ENCODE measurements at regions of chr10 and their contacts with region 1.

Region 1: GRCh38 chr10:62038609-62039190 is 137.2 kb downstream of the ARID5B start:
- DNase-seq: peak; percentile 100
- ATAC-seq: peak; percentile 50
- H3K4me3 ChIP-seq: peak overlapping the region; percentile 46
- H3K27ac ChIP-seq: peak overlapping the region; percentile 85
- H3K4me1 ChIP-seq: peaks cover 54% of the 10 kb centered on the region
- H3K27me3 ChIP-seq: no peaks in the 10 kb centered on the region
- CTCF ChIP-seq: peak; percentile 100

Region 2: DNA sequence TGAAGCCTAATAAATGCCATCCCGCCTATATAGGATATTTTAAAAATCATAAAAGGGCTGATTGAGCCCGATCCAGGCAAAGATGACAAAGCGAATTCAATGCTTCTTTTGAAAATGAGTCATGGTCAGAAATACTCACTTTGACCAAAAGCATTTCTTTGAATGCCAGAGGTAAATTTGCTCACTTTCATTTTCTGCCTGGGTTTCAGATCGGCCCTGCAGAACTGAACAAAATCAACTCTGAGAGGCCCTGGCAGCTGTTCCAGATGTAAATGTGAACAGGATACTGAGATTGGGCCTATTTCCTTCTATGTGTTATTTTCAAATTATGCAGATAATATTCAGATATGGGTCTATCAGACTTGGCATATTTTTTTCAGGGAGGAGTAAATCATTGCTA is 252.0 kb before region 1 on chr10:
- CTCF ChIA-PET with region 1: no interaction called
- POLR2A ChIA-PET with region 1: no interaction called
- intact Hi-C with region 1: no loop called
- DNase-seq: peak; percentile 93
- ATAC-seq: peak; percentile 80
- H3K4me3 ChIP-seq: peak overlapping the region; percentile 55
- H3K27ac ChIP-seq: peak overlapping the region; percentile 53
- H3K4me1 ChIP-seq: peaks cover 29% of the 10 kb centered on the region
- H3K27me3 ChIP-seq: no peaks in the 10 kb centered on the region
- CTCF ChIP-seq: no peak

Region 3: GRCh38 chr10:61835069-61835945 is 203.4 kb before region 1 on chr10:
- CTCF ChIA-PET with region 1: interaction called, 5 read pairs
- POLR2A ChIA-PET with region 1: interaction called, 3 read pairs
- intact Hi-C with region 1: loop called (anchors 1 kb)
- DNase-seq: peak; percentile 96
- ATAC-seq: peak; percentile 34
- H3K4me3 ChIP-seq: peak overlapping the region; percentile 25
- H3K27ac ChIP-seq: peak overlapping the region; percentile 66
- H3K4me1 ChIP-seq: peaks cover 50% of the 10 kb centered on the region
- H3K27me3 ChIP-seq: no peaks in the 10 kb centered on the region
- CTCF ChIP-seq: peak; percentile 99

Region 4: DNA sequence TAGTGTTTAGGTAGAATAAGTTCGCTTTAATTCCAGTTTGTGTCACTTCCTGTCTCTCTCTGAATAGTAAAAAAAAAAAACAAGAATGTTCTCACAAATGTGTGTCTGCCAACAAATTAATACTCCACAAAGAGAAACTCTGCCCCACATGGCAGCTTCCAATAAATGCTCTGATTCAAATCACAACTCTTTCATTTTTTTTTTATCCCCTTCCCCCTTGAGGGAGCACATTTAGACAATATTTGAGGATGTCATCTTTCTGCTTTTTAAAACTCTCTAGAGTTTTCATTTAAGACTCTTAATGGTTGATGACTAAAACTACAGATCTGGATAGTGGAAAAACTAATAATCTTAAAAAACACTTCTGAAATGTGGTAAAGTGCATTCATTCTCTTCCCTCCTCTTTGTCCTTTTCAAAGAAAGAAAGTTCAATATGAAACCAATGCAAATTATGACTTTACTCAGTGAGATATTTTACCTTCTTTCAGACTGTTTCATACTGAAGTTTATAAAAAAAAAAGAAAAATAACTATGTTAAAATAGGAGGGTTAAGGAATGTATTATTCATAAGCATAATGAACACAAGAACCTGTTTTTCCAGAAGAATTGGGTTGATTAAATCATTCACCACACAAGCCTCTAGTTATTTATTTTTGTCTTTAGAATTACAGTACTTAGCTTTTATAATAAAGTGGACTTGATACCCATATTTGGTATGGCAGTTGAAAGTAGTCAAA is 94.9 kb before region 1 on chr10:
- CTCF ChIA-PET with region 1: interaction called, 4 read pairs
- POLR2A ChIA-PET with region 1: interaction called, 5 read pairs
- intact Hi-C with region 1: loop called (anchors 1 kb)
- DNase-seq: peak; percentile 99
- ATAC-seq: peak; percentile 14
- H3K4me3 ChIP-seq: peak overlapping the region; percentile 31
- H3K27ac ChIP-seq: peak overlapping the region; percentile 72
- H3K4me1 ChIP-seq: peaks cover 65% of the 10 kb centered on the region
- H3K27me3 ChIP-seq: no peaks in the 10 kb centered on the region
- CTCF ChIP-seq: peak; percentile 73

Region 5: DNA sequence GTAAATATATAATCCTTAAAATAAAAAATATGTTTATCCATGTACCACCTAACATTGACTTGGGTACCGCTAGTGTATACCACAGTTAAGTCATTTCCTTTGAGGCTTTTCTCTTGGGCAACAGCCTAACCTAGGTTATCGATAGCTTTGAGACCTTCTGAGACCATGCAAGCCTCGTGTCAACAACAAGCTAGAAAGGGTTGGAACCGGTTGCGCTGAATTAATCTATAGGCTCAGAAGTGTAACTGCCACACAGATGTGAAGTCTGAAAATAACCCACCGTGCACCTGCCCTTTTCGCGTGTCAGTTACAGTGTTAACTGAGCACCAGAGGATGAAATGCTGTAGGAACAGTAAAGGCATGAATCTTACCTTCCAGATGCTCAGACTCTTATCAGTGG is 77.4 kb before region 1 on chr10:
- CTCF ChIA-PET with region 1: no interaction called
- POLR2A ChIA-PET with region 1: no interaction called
- intact Hi-C with region 1: no loop called
- DNase-seq: no peak
- ATAC-seq: no peak
- H3K4me3 ChIP-seq: no peak overlapping the region
- H3K27ac ChIP-seq: no peak overlapping the region
- H3K4me1 ChIP-seq: no peaks in the 10 kb centered on the region
- H3K27me3 ChIP-seq: no peaks in the 10 kb centered on the region
- CTCF ChIP-seq: no peak

Region 6: GRCh38 chr10:61974601-61975390 is 63.9 kb before region 1 on chr10:
- CTCF ChIA-PET with region 1: no interaction called
- POLR2A ChIA-PET with region 1: no interaction called
- intact Hi-C with region 1: no loop called
- DNase-seq: peak; percentile 68
- ATAC-seq: peak; percentile 27
- H3K4me3 ChIP-seq: no peak overlapping the region
- H3K27ac ChIP-seq: 0 out of 2 replicates have a peak overlapping the region, but pooled peaks have one; percentile 1
- H3K4me1 ChIP-seq: peaks cover 26% of the 10 kb centered on the region
- H3K27me3 ChIP-seq: no peaks in the 10 kb centered on the region
- CTCF ChIP-seq: no peak

Region 7: GRCh38 chr10:61992671-61993668 is 45.7 kb before region 1 on chr10:
- CTCF ChIA-PET with region 1: no interaction called
- POLR2A ChIA-PET with region 1: no interaction called
- intact Hi-C with region 1: no loop called
- DNase-seq: peak; percentile 50
- ATAC-seq: no peak
- H3K4me3 ChIP-seq: no peak overlapping the region
- H3K27ac ChIP-seq: no peak overlapping the region
- H3K4me1 ChIP-seq: no peaks in the 10 kb centered on the region
- H3K27me3 ChIP-seq: no peaks in the 10 kb centered on the region
- CTCF ChIP-seq: no peak

Region 8: DNA sequence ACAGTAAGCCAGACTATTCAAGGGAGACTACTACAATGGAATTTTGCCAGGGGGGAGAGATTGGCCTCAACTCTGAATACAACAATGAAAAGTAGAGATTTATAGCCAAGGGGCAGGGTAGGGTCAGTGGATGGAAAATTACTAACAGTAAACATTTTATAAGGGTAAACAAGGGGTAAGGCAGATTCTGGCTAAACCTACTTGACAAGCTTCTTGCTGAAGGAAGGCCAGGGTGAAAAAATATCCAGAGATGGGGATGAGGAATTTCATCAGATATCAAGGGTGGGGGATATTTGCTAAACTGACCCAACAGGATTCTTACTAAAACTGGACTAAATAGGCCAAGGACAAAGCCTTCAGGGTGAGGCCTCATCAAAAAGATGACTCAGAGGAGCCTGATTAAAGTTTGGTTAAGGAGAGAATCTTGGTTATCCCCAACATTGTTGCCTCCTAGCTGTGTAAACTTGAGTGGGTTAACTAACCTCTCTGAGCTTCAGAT is 73.6 kb after region 1 on chr10:
- CTCF ChIA-PET with region 1: interaction called, 4 read pairs
- POLR2A ChIA-PET with region 1: no interaction called
- intact Hi-C with region 1: loop called (anchors 1 kb)
- DNase-seq: peak; percentile 100
- ATAC-seq: peak; percentile 83
- H3K4me3 ChIP-seq: no peak overlapping the region
- H3K27ac ChIP-seq: peak overlapping the region; percentile 62
- H3K4me1 ChIP-seq: peaks cover 74% of the 10 kb centered on the region
- H3K27me3 ChIP-seq: no peaks in the 10 kb centered on the region
- CTCF ChIP-seq: no peak

Region 9: DNA sequence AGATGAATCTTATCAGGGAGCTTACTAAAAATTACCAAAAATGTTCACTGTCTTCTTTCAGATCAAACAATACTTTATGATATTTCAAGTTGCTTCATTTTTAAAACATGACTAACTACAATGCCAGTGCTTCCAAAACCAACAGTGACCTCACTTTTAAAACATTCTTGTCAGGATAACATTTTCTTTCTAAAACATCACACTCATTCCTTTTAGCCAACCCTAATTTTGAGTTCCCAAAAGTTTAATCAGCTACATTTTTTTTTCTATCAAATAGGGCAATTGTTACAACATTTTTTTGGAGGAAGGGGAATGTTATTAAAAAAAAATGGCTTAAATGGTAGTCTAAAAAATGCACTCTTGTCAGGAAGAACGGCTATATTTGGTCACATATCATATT is 192.7 kb after region 1 on chr10:
- CTCF ChIA-PET with region 1: interaction called, 11 read pairs
- POLR2A ChIA-PET with region 1: no interaction called
- intact Hi-C with region 1: loop called (anchors 1 kb)
- DNase-seq: peak; percentile 99
- ATAC-seq: peak; percentile 76
- H3K4me3 ChIP-seq: peak overlapping the region; percentile 25
- H3K27ac ChIP-seq: peak overlapping the region; percentile 73
- H3K4me1 ChIP-seq: peaks cover 55% of the 10 kb centered on the region
- H3K27me3 ChIP-seq: no peaks in the 10 kb centered on the region
- CTCF ChIP-seq: no peak

Region 10: GRCh38 chr10:62414359-62414758 is 375.7 kb after region 1 on chr10:
- CTCF ChIA-PET with region 1: interaction called, 3 read pairs
- POLR2A ChIA-PET with region 1: interaction called, 4 read pairs
- intact Hi-C with region 1: loop called (anchors 5 kb)
- DNase-seq: peak; percentile 88
- ATAC-seq: peak; percentile 57
- H3K4me3 ChIP-seq: no peak overlapping the region
- H3K27ac ChIP-seq: no peak overlapping the region
- H3K4me1 ChIP-seq: peaks cover 9% of the 10 kb centered on the region
- H3K27me3 ChIP-seq: no peaks in the 10 kb centered on the region
- CTCF ChIP-seq: peak; percentile 91

Measured in PC-3 (cell line).